HEK293 (cell line): ENCODE measurements at regions of chr1 and their contacts with region 1.

Region 1: DNA sequence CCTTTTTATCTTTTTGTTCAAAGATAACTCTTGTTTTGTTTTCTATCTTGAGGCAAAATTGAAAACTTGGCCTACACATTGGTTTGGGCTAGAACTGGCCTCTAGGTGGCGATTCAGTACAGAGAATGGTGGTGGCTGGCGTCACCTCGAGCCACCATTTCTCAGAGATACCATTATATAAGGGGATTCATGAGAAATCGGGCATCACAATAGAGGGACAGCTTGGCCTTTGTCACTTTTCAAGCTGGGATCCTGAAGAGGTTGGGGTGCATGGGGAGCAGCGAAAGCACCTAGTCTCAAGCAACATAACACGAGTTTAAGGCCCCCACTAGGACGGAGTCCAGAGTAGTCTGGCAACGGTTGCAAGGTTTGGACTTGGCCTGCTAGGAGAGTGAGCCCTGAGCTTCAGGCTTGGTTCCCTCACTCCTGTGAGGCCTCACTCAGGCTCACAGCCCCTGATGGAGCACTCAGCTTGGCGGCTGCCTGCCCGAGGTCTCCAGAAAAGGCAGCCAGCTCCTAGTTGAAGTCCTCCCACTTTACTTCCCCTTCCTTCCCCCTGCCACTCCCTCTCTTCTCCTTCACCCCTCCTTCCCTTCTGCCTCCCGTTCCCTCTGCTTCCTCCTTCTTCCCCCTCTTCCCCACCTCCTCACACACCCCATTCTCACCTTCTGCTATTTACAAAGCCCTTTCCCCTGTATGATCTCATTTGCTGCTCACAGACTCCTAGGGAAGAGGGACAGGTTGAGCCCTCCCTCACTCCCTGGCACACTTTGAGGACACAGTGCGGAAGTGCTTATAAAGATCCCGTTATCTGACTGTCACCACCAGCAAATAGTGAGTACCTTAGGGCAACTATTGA is 67.8 kb downstream of the LRIG2 start:
- H3K4me3 ChIP-seq: no peak overlapping the region
- H3K27ac ChIP-seq: no peak overlapping the region
- H3K4me1 ChIP-seq: no peaks in the 10 kb centered on the region
- CTCF ChIP-seq: peak; percentile 77

Region 2: DNA sequence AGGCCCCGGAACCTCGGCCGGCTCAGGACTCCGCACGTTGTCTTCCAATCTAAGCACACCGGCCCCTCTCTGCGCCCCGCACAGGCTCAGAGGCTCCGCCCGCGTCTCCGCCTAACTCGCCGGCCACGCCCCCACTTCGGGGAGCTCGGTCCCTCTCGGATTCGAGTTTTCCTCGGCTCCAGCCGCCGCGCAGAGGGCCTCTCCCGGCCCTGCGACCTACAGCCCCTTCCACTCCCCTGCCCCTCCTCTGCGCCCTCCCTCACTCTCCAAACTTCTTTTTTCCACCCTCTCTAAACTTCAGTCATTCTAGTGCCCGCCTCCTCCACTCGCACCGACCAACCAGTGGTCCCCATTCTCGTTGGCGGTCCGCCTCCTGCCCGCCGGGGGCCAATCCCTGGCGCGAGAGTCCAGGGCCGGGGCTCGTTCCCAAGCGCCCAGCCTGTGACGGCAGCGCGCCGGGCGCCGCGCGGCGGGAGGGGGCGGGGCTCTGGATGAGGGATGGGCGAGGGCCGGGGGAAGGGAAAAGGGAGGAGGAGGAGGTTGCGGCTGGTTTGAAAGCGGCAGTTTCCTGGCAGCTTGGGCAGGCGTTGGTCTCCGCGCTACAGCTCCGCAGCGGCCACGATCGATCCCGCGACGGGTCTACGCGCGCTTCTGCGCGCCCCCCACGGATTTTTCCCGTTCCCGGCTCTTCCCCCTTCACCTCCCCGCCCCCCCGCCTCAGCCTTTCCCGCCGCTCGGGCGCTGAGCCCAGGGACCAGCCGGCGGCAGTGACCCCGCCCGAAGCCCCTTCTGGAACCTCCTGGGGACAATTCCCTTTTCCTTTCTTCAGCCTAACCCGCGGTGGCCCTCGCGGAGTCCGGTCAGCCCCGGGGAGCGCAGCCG is 249.4 kb after region 1 on chr1 and contains the start of gene MAGI3:
- CTCF ChIA-PET with region 1: interaction called, 16 read pairs
- POLR2A ChIA-PET with region 1: interaction called, 9 read pairs
- H3K4me3 ChIP-seq: peak within 1 kb of the TSS; percentile 97
- H3K27ac ChIP-seq: peak within 1 kb of the TSS; percentile 93
- H3K4me1 ChIP-seq: peaks cover 17% of the 10 kb centered on the region
- CTCF ChIP-seq: no peak

Region 3: DNA sequence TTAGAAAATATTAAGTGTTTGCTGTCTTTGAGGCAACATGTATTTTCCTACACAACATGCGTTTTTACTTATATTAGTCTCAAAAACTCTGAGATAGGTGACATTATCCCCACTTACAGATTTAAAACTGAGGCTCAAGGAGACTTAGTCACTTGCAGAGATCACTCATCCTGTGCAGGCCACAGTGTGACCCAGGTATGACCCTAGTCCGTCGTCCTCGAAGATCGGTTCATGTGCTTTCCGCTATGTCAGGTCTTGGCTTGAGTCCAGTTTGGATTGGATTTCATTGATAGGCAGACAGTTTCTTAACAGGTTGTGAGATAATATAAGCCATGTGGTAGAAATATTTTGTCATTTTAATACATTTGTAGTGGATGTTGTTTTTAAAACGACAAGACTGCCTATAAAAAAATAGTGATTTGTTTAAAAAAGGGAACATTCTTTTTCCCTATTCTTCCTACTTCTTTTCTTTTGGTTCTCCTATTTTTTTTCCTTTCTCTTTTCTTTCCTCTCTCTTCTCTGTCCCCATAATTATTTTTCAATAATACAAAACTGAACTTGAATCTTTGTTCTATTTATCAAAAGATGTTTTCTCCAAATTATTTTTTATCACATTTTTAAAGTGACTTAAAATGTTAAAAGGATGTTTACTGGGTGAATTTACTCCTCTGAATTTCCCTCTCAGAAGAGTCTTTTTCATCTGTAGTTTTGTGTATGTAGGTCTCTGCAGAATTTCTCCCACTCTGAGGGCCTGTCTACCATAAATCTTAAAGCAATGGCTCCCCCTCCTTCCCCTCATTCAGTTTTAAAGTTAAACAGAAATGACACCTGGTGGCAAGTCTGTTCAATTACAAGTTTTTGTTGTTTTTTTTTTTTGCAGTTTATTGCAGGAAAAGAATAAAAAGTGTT is 536.7 kb after region 1 on chr1:
- CTCF ChIA-PET with region 1: interaction called, 11 read pairs
- POLR2A ChIA-PET with region 1: no interaction called
- H3K4me3 ChIP-seq: no peak overlapping the region
- H3K27ac ChIP-seq: no peak overlapping the region
- H3K4me1 ChIP-seq: peaks cover 2% of the 10 kb centered on the region; the same call in 1 of the 2 replicates
- CTCF ChIP-seq: peak; percentile 48; the same call in 1 of the 2 replicates